CD8-positive, alpha-beta memory T cell (primary cell): ENCODE measurements at regions of chr16 and their contacts with region 1.

Region 1: DNA sequence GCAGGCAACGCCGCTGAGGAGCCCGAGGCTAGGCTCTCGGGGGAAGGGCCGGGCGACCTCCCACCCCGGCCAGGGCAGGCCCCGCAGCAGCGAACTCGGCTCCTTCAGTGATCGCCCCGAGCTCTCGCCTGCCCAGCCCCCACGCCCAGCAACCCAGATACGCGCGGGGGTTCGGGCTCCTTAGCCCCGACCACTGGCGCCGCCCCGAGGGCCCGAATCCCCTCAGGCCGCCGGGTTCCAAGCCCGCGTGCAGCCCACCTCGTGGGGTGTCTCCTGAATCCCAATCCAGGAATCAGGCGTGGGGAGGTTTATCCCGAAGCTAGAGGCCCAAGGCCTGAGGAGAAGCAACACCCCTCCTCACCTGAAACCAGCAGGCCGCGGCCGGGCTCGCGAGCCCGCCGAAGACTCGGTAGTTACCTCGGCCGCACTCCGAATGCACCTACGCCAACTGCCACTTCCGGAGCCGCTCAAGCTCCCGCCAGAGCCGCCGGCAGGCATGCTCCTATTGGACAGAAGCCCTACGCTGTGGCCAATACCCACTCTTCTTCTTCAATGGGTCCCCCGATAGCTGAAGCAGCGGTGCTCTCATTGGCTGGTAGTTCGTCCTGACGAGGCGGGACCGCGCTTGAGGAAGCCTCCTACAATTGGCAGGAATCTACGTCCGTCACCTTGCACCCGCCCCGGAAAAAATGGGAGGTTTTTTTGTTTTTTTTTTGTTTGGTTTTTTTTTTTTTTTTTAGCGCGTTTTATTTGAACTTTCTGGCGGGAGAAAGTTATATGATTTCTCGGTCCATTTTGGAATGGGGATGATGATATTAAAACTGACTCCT is at the start of gene RFWD3:
- DNase-seq: peak; percentile 93 to 99 (median 97)
- H3K4me3 ChIP-seq: peak within 1 kb of the TSS; percentile 85
- H3K4me3 Mint-ChIP-seq: peak within 1 kb of the TSS; percentile 84 to 99 (median 93)
- H3K27ac ChIP-seq: peak within 1 kb of the TSS; percentile 86
- H3K27ac Mint-ChIP-seq: peak within 1 kb of the TSS; percentile 76 to 97 (median 93)
- H3K4me1 ChIP-seq: peaks cover 34% of the 10 kb centered on the region
- H3K4me1 Mint-ChIP-seq: peaks cover 36 to 55% (median 44%) of the 10 kb centered on the region in 3 donors
- H3K27me3 ChIP-seq: no peaks in the 10 kb centered on the region
- H3K27me3 Mint-ChIP-seq: peaks cover 0 to 2% of the 10 kb centered on the region in 2 donors
- total RNA-seq, gene RFWD3: 99.5 to 113 TPM

Region 2: DNA sequence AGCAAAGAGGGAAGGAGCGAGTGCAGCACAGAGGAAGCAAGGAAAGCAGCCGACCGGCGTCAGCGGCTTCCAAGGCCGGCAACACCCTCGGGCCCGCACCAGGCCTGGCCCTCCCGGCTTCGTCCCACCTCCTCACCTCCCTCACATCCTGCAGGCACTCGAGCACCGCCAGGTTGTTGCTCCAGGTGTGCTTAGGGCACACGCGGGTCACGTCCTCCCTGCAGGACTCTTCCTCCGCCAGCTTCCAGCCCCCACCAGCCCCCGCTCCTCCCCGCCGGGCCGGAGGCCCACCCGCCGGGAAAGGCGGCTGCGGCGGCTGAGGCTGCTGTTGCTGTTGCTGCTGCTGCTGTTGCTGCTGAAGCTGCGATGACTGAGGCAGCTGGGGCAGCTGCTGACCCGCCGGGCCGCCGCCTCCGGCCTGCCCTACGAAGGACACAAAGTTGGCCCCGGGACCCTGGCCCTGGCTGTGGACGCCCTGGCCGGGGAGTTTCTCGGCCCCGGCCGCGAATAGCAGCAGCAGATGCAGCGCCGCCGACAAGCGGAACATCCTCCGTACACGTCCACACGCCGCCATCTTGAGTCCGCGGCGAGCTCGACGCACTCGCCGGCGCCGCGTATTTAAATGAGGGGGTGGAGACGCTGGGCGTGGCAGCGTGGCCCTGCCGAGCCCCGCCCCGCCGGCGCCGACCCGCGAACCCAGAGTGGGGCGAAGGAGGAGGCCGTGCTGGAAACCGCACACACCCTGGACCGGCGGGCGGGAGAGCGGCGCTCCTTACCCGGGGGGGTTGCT is 59.9 kb before region 1 on chr16 and contains the start of gene GLG1:
- CTCF ChIA-PET with region 1: interaction called, 6 read pairs
- POLR2A ChIA-PET with region 1: interaction called, 19 read pairs
- DNase-seq: peak; percentile 88 to 92 (median 90)
- H3K4me3 ChIP-seq: peak within 1 kb of the TSS; percentile 75
- H3K4me3 Mint-ChIP-seq: peak within 1 kb of the TSS; percentile 91 to 98 (median 94)
- H3K27ac ChIP-seq: peak within 1 kb of the TSS; percentile 96
- H3K27ac Mint-ChIP-seq: peak within 1 kb of the TSS; percentile 78 to 99 (median 94)
- H3K4me1 ChIP-seq: peaks cover 62% of the 10 kb centered on the region
- H3K4me1 Mint-ChIP-seq: peaks cover 48 to 68% (median 65%) of the 10 kb centered on the region in 3 donors
- H3K27me3 ChIP-seq: no peaks in the 10 kb centered on the region
- H3K27me3 Mint-ChIP-seq: no peaks in the 10 kb centered on the region
- total RNA-seq, gene GLG1: 52.3 to 56.7 TPM

Region 3: GRCh38 chr16:74684131-74684530 is 17.5 kb after region 1 on chr16:
- CTCF ChIA-PET with region 1: no interaction called
- POLR2A ChIA-PET with region 1: no interaction called
- DNase-seq: no peak
- H3K4me3 ChIP-seq: no peak overlapping the region
- H3K4me3 Mint-ChIP-seq: no peak overlapping the region
- H3K27ac ChIP-seq: no peak overlapping the region
- H3K27ac Mint-ChIP-seq: peak overlapping the region in 1 of 8 donors; percentile 72
- H3K4me1 ChIP-seq: no peaks in the 10 kb centered on the region
- H3K4me1 Mint-ChIP-seq: no peaks in the 10 kb centered on the region
- H3K27me3 ChIP-seq: no peaks in the 10 kb centered on the region
- H3K27me3 Mint-ChIP-seq: no peaks in the 10 kb centered on the region

Region 4: DNA sequence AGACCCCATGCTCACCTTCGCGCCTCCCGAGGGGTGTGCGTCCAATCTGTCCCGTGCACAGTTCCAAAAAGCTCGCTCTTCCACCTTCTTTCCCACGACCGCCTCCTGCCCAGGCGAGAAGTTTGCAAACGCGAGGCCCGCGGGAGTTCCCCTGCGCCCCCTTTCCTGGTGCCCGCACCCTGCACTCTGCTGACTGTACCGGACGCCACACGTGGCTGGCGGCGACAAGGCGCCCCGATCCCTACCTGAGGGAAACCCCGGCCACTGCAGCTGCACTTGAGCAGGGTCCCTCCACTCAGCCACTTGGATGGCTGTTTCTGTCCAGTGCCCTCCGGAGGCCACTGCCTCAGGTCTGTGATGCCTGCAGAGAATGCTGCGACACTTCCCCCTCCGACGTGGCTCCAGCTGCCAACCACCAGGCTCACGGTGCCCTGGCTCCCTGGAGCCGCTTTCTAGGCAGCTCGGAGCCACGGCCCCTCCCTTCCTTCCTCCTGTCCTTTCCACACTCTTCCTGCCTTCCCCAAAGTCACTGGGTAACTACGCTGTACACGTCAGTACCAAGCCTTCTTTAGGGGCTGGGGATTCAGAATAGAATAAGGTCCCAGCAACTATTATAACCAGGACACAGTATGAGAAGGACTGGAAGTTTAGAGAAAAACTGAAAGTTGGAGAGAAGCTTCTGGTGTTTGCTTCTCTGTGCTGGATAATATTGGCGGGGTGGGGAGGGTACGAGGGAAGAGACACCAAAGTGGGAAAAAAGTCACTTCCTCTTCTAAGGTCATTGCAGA is 34.0 kb after region 1 on chr16 and contains the start of gene MLKL:
- CTCF ChIA-PET with region 1: interaction called, 6 read pairs
- POLR2A ChIA-PET with region 1: interaction called, 21 read pairs
- DNase-seq: peak; percentile 49 to 68 (median 56)
- H3K4me3 ChIP-seq: peak within 1 kb of the TSS; percentile 79
- H3K4me3 Mint-ChIP-seq: peak within 1 kb of the TSS; percentile 93 to 100 (median 100)
- H3K27ac ChIP-seq: peak within 1 kb of the TSS; percentile 69
- H3K27ac Mint-ChIP-seq: peak within 1 kb of the TSS; percentile 91 to 100 (median 98)
- H3K4me1 ChIP-seq: peaks cover 33% of the 10 kb centered on the region
- H3K4me1 Mint-ChIP-seq: peaks cover 52 to 62% (median 60%) of the 10 kb centered on the region in 3 donors
- H3K27me3 ChIP-seq: no peaks in the 10 kb centered on the region
- H3K27me3 Mint-ChIP-seq: no peaks in the 10 kb centered on the region
- total RNA-seq, gene MLKL: 13.9 to 17.5 TPM